ENCODE measurements at regions of chr4 and their contacts with region 1.

Region 1: GRCh38 chr4:88514557-88515511 is 8.7 kb downstream of the PYURF start:
- DNase-seq: no peak
- H3K4me3 ChIP-seq: no peak overlapping the region
- H3K27ac ChIP-seq: no peak overlapping the region
- H3K4me1 ChIP-seq: peaks cover 4% of the 10 kb centered on the region
- H3K27me3 ChIP-seq: no peaks in the 10 kb centered on the region
- CTCF ChIP-seq: no peak
- POLR2A ChIP-seq: no peak

Region 2: GRCh38 chr4:87911252-87911774 is 603.5 kb before region 1 on chr4:
- intact Hi-C with region 1: no loop called
- DNase-seq: no peak
- H3K4me3 ChIP-seq: no peak overlapping the region
- H3K27ac ChIP-seq: no peak overlapping the region
- H3K4me1 ChIP-seq: peaks cover 3% of the 10 kb centered on the region
- H3K27me3 ChIP-seq: no peaks in the 10 kb centered on the region
- CTCF ChIP-seq: no peak
- POLR2A ChIP-seq: no peak

Region 3: GRCh38 chr4:88178626-88179221 is 336.1 kb before region 1 on chr4:
- intact Hi-C with region 1: no loop called
- DNase-seq: no peak
- H3K4me3 ChIP-seq: no peak overlapping the region
- H3K27ac ChIP-seq: no peak overlapping the region
- H3K4me1 ChIP-seq: no peaks in the 10 kb centered on the region
- H3K27me3 ChIP-seq: no peaks in the 10 kb centered on the region
- CTCF ChIP-seq: no peak
- POLR2A ChIP-seq: no peak

Region 4: GRCh38 chr4:88223516-88223915 is 291.3 kb before region 1 on chr4:
- intact Hi-C with region 1: loop called (anchors 5 kb)
- DNase-seq: no peak
- H3K4me3 ChIP-seq: no peak overlapping the region
- H3K27ac ChIP-seq: no peak overlapping the region
- H3K4me1 ChIP-seq: no peaks in the 10 kb centered on the region
- H3K27me3 ChIP-seq: no peaks in the 10 kb centered on the region
- CTCF ChIP-seq: no peak
- POLR2A ChIP-seq: no peak

Region 5: GRCh38 chr4:88366460-88366859 is 148.4 kb before region 1 on chr4:
- intact Hi-C with region 1: loop called (anchors 10 kb)
- DNase-seq: no peak
- H3K4me3 ChIP-seq: no peak overlapping the region
- H3K27ac ChIP-seq: no peak overlapping the region
- H3K4me1 ChIP-seq: no peaks in the 10 kb centered on the region
- H3K27me3 ChIP-seq: no peaks in the 10 kb centered on the region
- CTCF ChIP-seq: no peak
- POLR2A ChIP-seq: no peak

Region 6: GRCh38 chr4:88706574-88706973 is 191.7 kb after region 1 on chr4:
- intact Hi-C with region 1: no loop called
- DNase-seq: peak; percentile 51
- H3K4me3 ChIP-seq: no peak overlapping the region
- H3K27ac ChIP-seq: peak overlapping the region in 1 of 2 donors; percentile 17
- H3K4me1 ChIP-seq: peaks cover 4% of the 10 kb centered on the region
- H3K27me3 ChIP-seq: no peaks in the 10 kb centered on the region
- CTCF ChIP-seq: peak; percentile 17 to 73 (median 62)
- POLR2A ChIP-seq: no peak